PC-9 (cell line): ENCODE measurements at regions of chr5 and their contacts with region 1.

Region 1: GRCh38 chr5:1140171-1140817 is 28.4 kb upstream of the SLC12A7 start:
- DNase-seq: peak; percentile 69 to 96
- H3K4me3 ChIP-seq: no peak overlapping the region
- H3K27ac ChIP-seq: no peak overlapping the region
- H3K4me1 ChIP-seq: 0 out of 2 replicates have a peak, but pooled peaks cover 3% of the 10 kb centered on the region
- H3K27me3 ChIP-seq: peaks cover 7% of the 10 kb centered on the region
- CTCF ChIP-seq: peak; percentile 99

Region 2: DNA sequence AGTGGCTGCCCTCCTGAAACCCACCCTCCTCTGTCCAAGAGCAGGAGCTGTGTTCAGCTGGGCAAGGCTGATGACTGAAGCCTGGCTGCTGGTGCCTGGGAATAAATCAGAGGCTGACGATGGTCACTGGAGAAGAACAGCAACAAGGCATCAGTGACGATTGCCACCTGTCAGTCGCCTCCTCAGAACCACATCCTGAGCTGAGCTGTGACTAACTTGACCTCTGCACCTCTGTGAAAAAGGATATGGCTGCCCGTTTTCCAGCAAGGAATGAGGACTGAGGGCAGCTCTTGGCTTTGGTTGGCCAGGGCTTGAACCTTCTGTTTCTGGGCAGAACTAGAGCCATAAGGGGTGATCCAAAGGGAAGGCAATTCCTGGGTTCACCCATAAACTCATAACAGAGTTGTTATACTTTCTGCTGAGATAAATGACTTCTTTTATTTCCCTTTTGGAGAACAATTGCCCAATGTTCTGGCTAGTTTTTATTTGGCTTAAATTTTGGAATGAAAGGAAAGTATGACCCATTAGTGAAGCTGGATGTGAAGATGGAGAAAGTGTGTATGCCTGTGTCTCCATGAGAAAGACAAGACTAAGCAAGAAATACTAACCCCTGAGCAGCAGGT is 207.6 kb before region 1 on chr5:
- CTCF ChIA-PET with region 1: interaction called, 11 read pairs
- POLR2A ChIA-PET with region 1: no interaction called
- intact Hi-C with region 1: no loop called
- DNase-seq: no peak
- H3K4me3 ChIP-seq: no peak overlapping the region
- H3K27ac ChIP-seq: no peak overlapping the region
- H3K4me1 ChIP-seq: 0 out of 2 replicates have a peak, but pooled peaks cover 6% of the 10 kb centered on the region
- H3K27me3 ChIP-seq: peaks cover 46% of the 10 kb centered on the region
- CTCF ChIP-seq: no peak

Region 3: GRCh38 chr5:1011226-1011631 is 129.1 kb before region 1 on chr5:
- CTCF ChIA-PET with region 1: interaction called, 3 read pairs
- POLR2A ChIA-PET with region 1: no interaction called
- intact Hi-C with region 1: loop called (anchors 1 kb)
- DNase-seq: peak in 1 of 2 experiments; percentile 87
- H3K4me3 ChIP-seq: no peak overlapping the region
- H3K27ac ChIP-seq: no peak overlapping the region
- H3K4me1 ChIP-seq: no peaks in the 10 kb centered on the region
- H3K27me3 ChIP-seq: peaks cover 87% of the 10 kb centered on the region
- CTCF ChIP-seq: peak; percentile 88

Region 4: GRCh38 chr5:1105350-1106265 is 34.7 kb before region 1 on chr5:
- CTCF ChIA-PET with region 1: no interaction called
- POLR2A ChIA-PET with region 1: no interaction called
- intact Hi-C with region 1: loop called (anchors 5 kb)
- DNase-seq: no peak
- H3K4me3 ChIP-seq: no peak overlapping the region
- H3K27ac ChIP-seq: no peak overlapping the region
- H3K4me1 ChIP-seq: peaks cover 6% of the 10 kb centered on the region
- H3K27me3 ChIP-seq: no peaks in the 10 kb centered on the region
- CTCF ChIP-seq: no peak